ENCODE measurements at regions of chr20 and their contacts with region 1.

Region 1: GRCh38 chr20:5608442-5609161 is 141.6 kb upstream of the SHLD1 start:
- DNase-seq: no peak
- ATAC-seq: no peak

Region 2: DNA sequence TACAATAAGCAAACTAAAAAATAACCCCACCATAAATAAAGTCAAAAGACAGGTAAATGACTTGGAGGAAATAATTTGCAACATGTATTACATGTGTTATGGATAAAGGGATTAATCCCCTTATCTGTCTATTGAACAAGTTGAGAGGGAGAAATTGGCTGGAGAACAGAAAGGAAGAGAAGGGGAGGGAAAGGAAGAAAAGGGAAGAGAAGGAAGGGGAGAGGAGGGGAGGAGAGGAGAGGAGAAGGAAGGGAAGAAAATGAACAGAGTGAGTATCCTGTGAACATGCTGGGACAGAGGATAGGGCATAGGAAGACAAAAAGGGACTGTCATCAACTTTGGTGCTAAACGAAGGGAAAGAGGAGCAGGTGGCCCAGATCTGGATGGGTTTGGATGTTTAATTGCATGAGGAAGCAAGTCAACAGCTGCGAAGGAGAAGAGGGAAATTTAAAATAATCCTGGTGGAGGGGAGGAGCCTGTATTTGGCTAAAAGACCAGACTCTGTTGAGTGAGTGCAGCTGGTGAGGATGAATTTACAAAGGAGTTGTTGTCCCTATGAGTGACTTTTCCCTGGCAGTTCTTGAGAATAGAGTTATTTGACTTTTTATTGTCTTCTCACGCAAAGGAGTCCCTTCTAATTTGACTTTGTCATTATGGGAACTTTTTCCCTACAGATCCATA is 127.4 kb after region 1 on chr20:
- intact Hi-C with region 1: loop called in 1 of 2 experiments (anchors 10 kb)
- DNase-seq: peak in 1 of 2 donors; percentile 13
- ATAC-seq: peak; percentile 21

Region 3: DNA sequence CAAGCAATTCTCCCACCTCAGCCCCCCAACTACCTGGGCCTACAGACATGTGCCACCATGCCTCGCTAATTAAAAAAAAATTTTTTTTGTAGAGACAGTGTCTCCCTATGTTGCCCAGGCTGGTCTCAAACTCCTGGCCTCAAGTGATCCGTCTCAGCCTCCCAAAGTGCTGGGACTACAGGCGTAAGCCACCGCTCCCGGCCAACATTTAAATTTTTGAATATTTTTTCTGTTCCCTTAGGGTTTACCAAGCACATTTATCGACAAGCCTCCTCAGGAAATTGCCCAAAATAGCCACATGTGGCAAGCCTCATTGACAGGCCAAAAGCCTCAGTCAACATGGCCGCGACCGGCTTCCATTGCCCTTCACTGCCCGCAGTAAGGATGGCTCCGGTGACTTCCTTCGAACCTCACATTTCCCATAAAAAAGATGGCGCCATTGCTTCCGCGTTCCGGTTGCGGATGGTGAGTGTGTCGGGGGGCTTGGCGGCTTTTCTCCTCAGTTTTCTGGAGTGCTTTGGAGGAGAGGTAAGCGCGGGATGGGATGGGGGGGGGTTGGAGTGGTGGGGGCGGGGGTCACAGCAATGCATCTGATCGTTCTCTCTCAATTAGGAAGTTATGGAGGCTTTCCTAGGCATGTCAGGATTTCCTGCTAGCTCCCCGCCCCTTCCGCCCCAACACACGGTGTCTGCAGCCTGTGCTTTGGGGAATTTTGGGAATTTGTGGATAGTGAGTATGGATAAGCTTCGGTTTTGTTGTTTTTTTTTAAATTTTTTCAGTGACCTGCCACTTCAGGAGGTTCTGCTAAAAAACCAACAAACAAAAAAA is 141.6 kb after region 1 on chr20 and contains the start of gene SHLD1:
- intact Hi-C with region 1: loop called in 1 of 2 experiments (anchors 5 kb)
- DNase-seq: peak; percentile 84 to 86
- ATAC-seq: peak; percentile 86
- total RNA-seq, gene SHLD1: 8.1 to 10.5 TPM

Region 4: DNA sequence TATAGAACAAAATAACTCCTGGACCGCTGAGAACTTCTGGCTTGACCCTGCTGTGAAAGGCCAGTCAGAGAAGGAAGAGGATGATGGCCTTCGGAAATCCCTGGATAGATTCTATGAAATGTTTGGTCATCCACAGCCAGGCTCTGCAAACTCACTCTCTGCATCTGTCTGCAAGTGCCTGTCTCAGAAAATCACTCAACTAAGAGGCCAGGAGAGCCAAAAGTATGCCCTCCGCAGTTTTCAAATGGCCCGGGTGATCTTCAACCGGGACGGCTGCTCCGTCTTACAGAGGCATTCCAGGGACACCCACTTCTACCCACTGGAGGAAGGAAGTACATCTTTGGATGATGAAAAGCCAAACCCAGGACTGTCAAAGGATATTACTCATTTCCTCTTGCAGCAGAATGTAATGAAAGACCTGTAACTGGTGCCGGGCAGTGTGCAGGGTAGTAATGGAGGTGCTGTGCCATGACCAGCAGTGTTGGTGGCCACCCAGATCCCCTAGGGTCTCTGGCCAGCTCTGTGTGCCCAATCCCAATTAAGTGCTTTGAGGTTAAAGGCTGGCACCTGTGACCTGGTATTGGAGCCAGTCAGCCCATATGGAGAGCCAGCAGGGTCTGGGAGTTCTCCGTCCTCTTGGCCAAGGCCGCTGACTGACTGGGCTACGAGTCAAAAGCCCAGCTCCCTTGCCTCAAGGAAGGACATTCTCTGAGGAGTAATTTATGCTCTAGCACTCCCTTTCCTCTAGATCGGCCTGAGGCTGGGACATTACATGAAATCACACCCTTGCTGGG is 254.6 kb after region 1 on chr20:
- intact Hi-C with region 1: no loop called
- DNase-seq: no peak
- ATAC-seq: no peak

Measured in left colon (tissue), 2 donors.